ENCODE measurements at regions of chr17 and their contacts with region 1.

Region 1: DNA sequence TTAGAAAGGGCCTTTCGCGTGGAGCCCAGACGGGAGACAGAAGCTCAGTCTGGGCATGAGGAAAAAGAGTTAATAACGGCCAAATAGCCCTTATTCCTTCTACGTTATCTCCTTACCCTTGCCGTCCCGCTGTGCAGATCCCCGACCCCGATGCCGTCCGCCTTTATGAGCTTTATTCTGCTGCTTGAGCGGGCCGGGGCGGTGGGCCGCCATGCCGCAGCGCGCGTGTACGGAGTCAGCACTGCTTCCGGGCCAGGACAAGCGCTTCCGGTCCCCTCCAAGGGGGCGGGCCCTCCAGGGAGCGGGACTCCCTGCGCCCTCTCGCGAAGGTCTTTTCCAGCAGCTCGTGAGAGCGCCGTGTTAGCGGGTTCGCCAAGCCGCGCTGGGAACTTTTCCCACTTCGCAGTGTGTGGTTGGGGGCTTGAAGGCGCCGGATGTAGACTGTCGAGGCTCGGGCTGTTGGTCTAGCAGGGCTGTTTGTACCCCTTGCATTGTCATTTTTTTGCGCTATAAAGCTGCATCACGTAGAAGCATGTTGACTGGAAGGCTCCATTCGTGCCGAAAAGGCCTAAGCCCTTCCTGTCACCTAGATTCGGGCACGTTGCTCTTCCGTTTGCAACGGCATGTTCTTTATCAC is at the start of gene TSR1:
- DNase-seq: peak; percentile 95
- total RNA-seq, gene TSR1: 23.0 TPM

Region 2: GRCh38 chr17:2303204-2304188 is 32.8 kb before region 1 on chr17 and contains the starts of genes SMG6 and SRR:
- intact Hi-C with region 1: loop called (anchors 2 kb)
- DNase-seq: peak; percentile 97
- total RNA-seq, gene SMG6: 19.7 TPM
- total RNA-seq, gene SRR: 9.3 TPM